Head of caudate nucleus (tissue), 42 donors: ENCODE measurements at regions of chr1 and their contacts with region 1.

Region 1: DNA sequence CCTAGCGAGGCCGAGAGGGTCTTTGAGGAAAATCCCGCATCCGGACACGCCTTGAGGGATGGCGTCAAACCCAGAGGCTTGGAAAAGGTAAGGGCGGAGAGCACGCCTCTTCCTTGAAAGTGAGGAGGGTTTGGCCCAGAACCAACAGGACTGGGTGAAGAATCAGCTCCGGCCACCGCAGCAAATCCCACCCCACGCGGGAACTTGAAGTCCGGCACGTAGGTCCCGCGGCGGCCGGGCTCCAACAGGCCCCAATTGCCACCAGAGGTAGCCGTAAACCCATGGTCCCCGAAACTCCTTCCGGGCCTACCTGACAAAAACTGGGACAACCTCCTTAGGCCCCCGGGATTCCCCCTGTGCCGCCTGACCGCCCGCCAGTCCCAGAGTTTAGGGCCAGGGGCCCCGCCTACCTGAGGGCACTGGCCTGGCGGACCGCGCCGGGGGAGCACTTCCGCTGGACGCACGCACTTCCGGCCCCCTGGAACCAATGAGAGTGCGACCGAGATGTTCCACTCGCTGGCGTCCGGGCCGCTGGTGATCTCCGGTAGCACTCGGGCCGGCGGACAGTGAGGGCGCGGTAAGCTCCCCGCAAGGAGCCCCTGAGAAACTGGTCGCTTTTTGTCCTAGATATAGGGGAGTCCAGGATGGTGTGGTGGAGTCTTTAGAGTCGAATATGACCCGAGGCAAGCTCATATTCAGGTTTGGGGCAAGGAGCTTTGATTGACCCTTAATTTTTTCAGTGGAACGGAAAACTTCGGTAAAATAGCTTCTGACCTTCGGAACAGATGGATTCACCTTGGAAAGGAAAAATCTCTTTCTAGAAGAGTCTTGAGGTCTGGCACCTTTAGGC is at the starts of genes LZIC and NMNAT1:
- DNase-seq: peak; percentile 86 to 97 (median 94)

Region 2: GRCh38 chr1:9874959-9875635 is 68.1 kb before region 1 on chr1:
- intact Hi-C with region 1: loop called (anchors 10 kb)
- DNase-seq: peak; percentile 64 to 93 (median 81)

Region 3: GRCh38 chr1:9910425-9911178 is 32.6 kb before region 1 on chr1:
- intact Hi-C with region 1: loop called (anchors 2 kb)
- DNase-seq: peak; percentile 99 to 100 (median 100)

Region 4: GRCh38 chr1:9920606-9921005 is 22.6 kb before region 1 on chr1:
- intact Hi-C with region 1: no loop called
- DNase-seq: no peak

Region 5: GRCh38 chr1:9984253-9984652 is 41.1 kb after region 1 on chr1:
- intact Hi-C with region 1: no loop called
- DNase-seq: peak in 16 of 42 donors; percentile 16 to 66 (median 31)

Region 6: GRCh38 chr1:10032590-10033358 is 89.6 kb after region 1 on chr1 and contains the start of gene UBE4B:
- intact Hi-C with region 1: loop called (anchors 5 kb)
- DNase-seq: peak; percentile 95 to 99 (median 98)

Region 7: GRCh38 chr1:10152709-10153284 is 209.6 kb after region 1 on chr1:
- intact Hi-C with region 1: loop called (anchors 5 kb)
- DNase-seq: peak; percentile 25 to 95 (median 83)